H1 (cell line): ENCODE measurements at regions of chr16 and their contacts with region 1.

Region 1: DNA sequence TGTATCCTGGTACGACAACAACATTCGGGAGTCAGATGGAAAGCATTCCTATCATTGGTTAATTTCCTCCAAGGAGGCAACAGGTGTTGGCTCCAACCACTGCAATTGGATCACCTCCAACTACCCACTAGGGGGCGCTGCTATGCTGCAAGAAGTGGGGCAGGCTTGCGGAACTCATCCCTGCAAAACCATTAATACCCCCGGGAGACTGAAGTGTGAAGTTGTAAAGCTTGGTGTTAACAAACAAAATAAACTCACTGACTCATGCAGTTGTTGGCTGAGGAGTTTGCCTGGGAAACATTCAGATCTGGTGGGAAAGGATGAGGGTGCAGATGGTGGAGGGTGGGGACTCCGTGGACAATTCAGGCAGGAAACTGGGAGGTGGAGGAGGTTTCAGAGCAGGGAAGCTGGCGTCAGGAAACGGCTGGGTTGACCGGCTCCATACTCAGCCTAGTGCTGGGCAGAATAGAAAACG is 84.9 kb downstream of the HS3ST2 start:
- DNase-seq: peak; percentile 68 to 93
- H3K4me3 ChIP-seq: no peak overlapping the region
- H3K27ac ChIP-seq: no peak overlapping the region
- H3K4me1 ChIP-seq: peaks cover 0 to 2% (median under 1%) of the 10 kb centered on the region in 4 experiments; a peak in 5 of 7 replicates
- H3K27me3 ChIP-seq: no peaks in the 10 kb centered on the region
- CTCF ChIP-seq: peak; percentile 88 to 96 (median 95)
- EP300 ChIP-seq: peak in 1 of 2 experiments; percentile 7; a peak in 1 of 3 replicates
- POLR2A ChIP-seq: no peak
- RAD21 ChIP-seq: peak; percentile 98 to 99

Region 2: GRCh38 chr16:22782314-22782713 is 116.6 kb before region 1 on chr16:
- CTCF ChIA-PET with region 1: no interaction called
- POLR2A ChIA-PET with region 1: no interaction called
- DNase-seq: no peak
- H3K4me3 ChIP-seq: no peak overlapping the region
- H3K27ac ChIP-seq: no peak overlapping the region
- H3K4me1 ChIP-seq: peaks cover 0 to 7% (median 6%) of the 10 kb centered on the region in 4 experiments; a peak in 3 of 7 replicates
- H3K27me3 ChIP-seq: no peaks in the 10 kb centered on the region
- CTCF ChIP-seq: no peak
- EP300 ChIP-seq: no peak
- POLR2A ChIP-seq: no peak
- RAD21 ChIP-seq: no peak

Region 3: GRCh38 chr16:22848451-22848850 is 50.5 kb before region 1 on chr16:
- CTCF ChIA-PET with region 1: no interaction called
- POLR2A ChIA-PET with region 1: no interaction called
- DNase-seq: no peak
- H3K4me3 ChIP-seq: no peak overlapping the region
- H3K27ac ChIP-seq: no peak overlapping the region
- H3K4me1 ChIP-seq: peaks cover 6 to 12% (median 7%) of the 10 kb centered on the region in 4 experiments; a peak in 4 of 7 replicates
- H3K27me3 ChIP-seq: no peaks in the 10 kb centered on the region
- CTCF ChIP-seq: no peak
- EP300 ChIP-seq: no peak
- POLR2A ChIP-seq: no peak
- RAD21 ChIP-seq: no peak

Region 4: DNA sequence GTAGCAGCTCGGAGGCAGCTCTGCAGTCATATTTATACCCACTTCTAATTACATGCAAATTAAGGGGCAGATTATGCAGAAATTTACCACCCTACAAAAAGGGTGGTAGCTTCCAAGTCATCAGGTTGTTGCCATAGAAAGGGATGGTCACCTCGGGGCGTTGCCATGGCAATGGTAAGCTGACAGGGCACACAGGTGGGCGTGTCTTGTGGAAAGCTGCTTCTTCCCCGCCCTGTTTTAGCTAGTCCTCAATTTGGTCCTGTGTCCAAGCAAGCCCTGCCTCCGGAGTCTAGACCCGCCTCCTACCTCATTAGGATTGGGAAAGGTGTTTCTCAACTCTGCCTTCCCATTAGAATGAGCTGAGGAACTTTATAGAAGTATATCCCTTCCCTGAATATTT is 13.7 kb after region 1 on chr16:
- CTCF ChIA-PET with region 1: interaction called, 41 read pairs
- POLR2A ChIA-PET with region 1: no interaction called
- DNase-seq: peak in 1 of 2 experiments; percentile 58
- H3K4me3 ChIP-seq: no peak overlapping the region
- H3K27ac ChIP-seq: no peak overlapping the region
- H3K4me1 ChIP-seq: no peaks in the 10 kb centered on the region
- H3K27me3 ChIP-seq: no peaks in the 10 kb centered on the region
- CTCF ChIP-seq: no peak
- EP300 ChIP-seq: no peak
- POLR2A ChIP-seq: no peak
- RAD21 ChIP-seq: no peak

Region 5: GRCh38 chr16:22942811-22943210 is 43.9 kb after region 1 on chr16:
- CTCF ChIA-PET with region 1: interaction called, 110 read pairs
- POLR2A ChIA-PET with region 1: interaction called, 4 read pairs
- DNase-seq: no peak
- H3K4me3 ChIP-seq: no peak overlapping the region
- H3K27ac ChIP-seq: no peak overlapping the region
- H3K4me1 ChIP-seq: peaks cover 0 to 5% (median 5%) of the 10 kb centered on the region in 4 experiments; a peak in 4 of 7 replicates
- H3K27me3 ChIP-seq: peaks cover 0 to under 1% (median under 1%) of the 10 kb centered on the region in 4 experiments; a peak in 1 of 7 replicates
- CTCF ChIP-seq: no peak
- EP300 ChIP-seq: no peak
- POLR2A ChIP-seq: no peak
- RAD21 ChIP-seq: no peak

Region 6: DNA sequence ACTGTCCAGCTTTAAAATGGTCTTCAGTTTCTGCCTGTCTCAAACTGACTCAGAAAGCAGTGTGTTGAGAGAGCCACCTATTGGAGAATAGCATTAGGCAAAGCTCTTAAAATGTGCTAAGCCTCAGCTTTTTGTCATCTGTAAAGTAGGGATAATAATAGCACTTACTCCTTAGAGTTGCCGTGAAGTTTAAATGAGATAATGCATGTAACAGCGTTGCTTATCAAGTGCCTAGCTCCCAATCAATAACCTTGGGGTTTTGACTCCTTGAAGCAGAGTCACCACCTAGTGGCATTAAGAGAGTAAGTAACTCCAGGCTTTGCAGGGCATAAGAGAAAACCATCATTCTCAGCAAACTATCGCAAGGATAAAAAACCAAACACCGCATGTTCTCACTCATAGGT is 78.4 kb after region 1 on chr16:
- CTCF ChIA-PET with region 1: interaction called, 92 read pairs
- POLR2A ChIA-PET with region 1: no interaction called
- DNase-seq: peak in 1 of 2 experiments; percentile 26
- H3K4me3 ChIP-seq: no peak overlapping the region
- H3K27ac ChIP-seq: no peak overlapping the region
- H3K4me1 ChIP-seq: no peaks in the 10 kb centered on the region
- H3K27me3 ChIP-seq: no peaks in the 10 kb centered on the region; a peak in 1 of 7 replicates
- CTCF ChIP-seq: peak in 2 of 3 experiments; percentile 53 to 55; a peak in 3 of 4 replicates
- EP300 ChIP-seq: no peak
- POLR2A ChIP-seq: no peak
- RAD21 ChIP-seq: peak; percentile 63 to 69

Region 7: DNA sequence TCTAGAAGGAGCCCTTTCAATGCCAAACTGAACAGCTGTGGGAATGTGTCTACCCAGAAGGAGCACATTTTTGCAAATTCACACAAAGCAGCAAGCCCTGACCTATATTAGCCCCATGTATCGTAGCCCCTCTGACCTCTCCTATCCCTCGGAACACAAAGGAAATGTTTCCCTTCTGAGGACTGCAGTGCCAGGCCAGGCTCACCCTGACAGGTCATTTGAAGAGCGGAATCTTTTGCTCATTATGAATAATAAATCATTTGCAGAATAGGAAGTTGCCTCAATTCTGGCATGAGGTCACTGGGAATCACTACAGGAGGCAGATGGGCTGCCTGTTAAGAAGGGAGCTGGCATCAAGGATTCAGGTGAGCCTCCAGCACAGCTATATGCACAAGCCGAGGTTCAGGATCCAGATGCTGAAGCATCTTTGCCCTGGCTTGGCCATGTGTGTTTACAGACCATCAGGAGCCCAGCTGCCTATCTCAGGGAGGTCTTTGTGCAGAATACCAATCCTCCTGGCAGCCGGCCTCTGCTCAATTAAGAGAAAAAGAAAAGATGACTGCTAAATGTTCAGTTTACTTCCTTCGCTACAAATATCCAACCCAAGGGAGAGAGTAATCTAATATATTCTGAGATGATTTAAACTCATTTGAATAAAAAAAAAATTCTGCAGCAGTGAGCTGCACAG is 131.0 kb after region 1 on chr16:
- CTCF ChIA-PET with region 1: interaction called, 12 read pairs
- POLR2A ChIA-PET with region 1: no interaction called
- DNase-seq: no peak
- H3K4me3 ChIP-seq: no peak overlapping the region
- H3K27ac ChIP-seq: no peak overlapping the region
- H3K4me1 ChIP-seq: peaks cover 2 to 7% (median 4%) of the 10 kb centered on the region in 4 experiments; a peak in 6 of 7 replicates
- H3K27me3 ChIP-seq: no peaks in the 10 kb centered on the region
- CTCF ChIP-seq: no peak
- EP300 ChIP-seq: no peak
- POLR2A ChIP-seq: no peak
- RAD21 ChIP-seq: no peak

Region 8: GRCh38 chr16:23081675-23082119 is 182.8 kb after region 1 on chr16:
- CTCF ChIA-PET with region 1: no interaction called
- POLR2A ChIA-PET with region 1: no interaction called
- DNase-seq: no peak
- H3K4me3 ChIP-seq: no peak overlapping the region
- H3K27ac ChIP-seq: no peak overlapping the region
- H3K4me1 ChIP-seq: peaks cover 0 to 10% (median 0%) of the 10 kb centered on the region in 4 experiments; a peak in 4 of 7 replicates
- H3K27me3 ChIP-seq: peaks cover 0 to 1% (median 0%) of the 10 kb centered on the region in 4 experiments; a peak in 1 of 7 replicates
- CTCF ChIP-seq: no peak
- EP300 ChIP-seq: no peak
- POLR2A ChIP-seq: no peak
- RAD21 ChIP-seq: no peak

Region 9: DNA sequence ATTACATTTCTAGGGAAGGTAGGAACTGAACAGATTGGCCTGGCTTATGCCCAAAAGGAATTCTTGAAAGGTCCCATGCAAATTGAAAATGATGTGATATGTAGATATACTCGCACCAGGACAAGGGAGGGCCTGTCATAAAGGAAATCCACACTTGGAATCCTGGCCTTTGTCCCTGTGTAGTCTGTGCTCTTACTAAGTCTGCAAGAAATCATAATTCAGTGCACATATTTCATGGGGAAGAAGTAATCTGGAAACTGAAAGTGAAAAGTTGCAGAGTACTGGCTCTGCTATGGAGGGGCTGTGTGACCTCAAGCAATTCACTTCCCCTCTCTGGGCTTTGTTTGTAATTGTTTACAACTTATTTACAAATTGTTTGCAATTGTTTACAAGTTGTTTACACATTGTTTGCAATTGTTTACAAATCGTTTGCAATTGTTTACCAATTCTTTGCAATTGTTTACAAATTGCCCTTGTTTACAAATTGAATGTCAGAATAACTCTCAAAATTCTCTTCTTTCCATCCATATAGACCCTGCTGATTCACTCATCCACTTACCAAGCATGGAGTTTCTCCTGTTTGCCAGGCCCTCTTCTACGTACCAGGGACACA is 296.6 kb after region 1 on chr16:
- CTCF ChIA-PET with region 1: no interaction called
- POLR2A ChIA-PET with region 1: no interaction called
- DNase-seq: no peak
- H3K4me3 ChIP-seq: no peak overlapping the region
- H3K27ac ChIP-seq: no peak overlapping the region
- H3K4me1 ChIP-seq: peaks cover 5 to 20% (median 11%) of the 10 kb centered on the region in 4 experiments; a peak in 6 of 7 replicates
- H3K27me3 ChIP-seq: no peaks in the 10 kb centered on the region
- CTCF ChIP-seq: no peak
- EP300 ChIP-seq: no peak
- POLR2A ChIP-seq: no peak
- RAD21 ChIP-seq: no peak